Activated CD4-positive, alpha-beta memory T cell treated with anti-CD3 and anti-CD28 coated beads for 36 hours (primary cell): ENCODE measurements at regions of chr16 and their contacts with region 1.

Region 1: GRCh38 chr16:3880623-3881498 is at the start of gene CREBBP:
- DNase-seq: peak; percentile 90
- H3K4me3 Mint-ChIP-seq: peak within 1 kb of the TSS; percentile 91
- H3K27ac Mint-ChIP-seq: peak within 1 kb of the TSS; percentile 90
- H3K4me1 Mint-ChIP-seq: peaks cover 40% of the 10 kb centered on the region
- H3K27me3 Mint-ChIP-seq: no peaks in the 10 kb centered on the region
- total RNA-seq, gene CREBBP: 26.6 to 29.5 TPM

Region 2: GRCh38 chr16:3654249-3654991 is 226.4 kb before region 1 on chr16 and contains the start of gene DNASE1:
- CTCF ChIA-PET with region 1: no interaction called
- POLR2A ChIA-PET with region 1: no interaction called
- intact Hi-C with region 1: loop called (anchors 2 kb)
- DNase-seq: peak; percentile 71
- H3K4me3 Mint-ChIP-seq: no peak within 1 kb of the TSS
- H3K27ac Mint-ChIP-seq: peak within 1 kb of the TSS; percentile 11
- H3K4me1 Mint-ChIP-seq: peaks cover 13% of the 10 kb centered on the region
- H3K27me3 Mint-ChIP-seq: no peaks in the 10 kb centered on the region
- total RNA-seq, gene DNASE1: 11.4 to 14.3 TPM

Region 3: GRCh38 chr16:3690470-3690928 is 190.4 kb before region 1 on chr16:
- CTCF ChIA-PET with region 1: interaction called, 3 read pairs
- POLR2A ChIA-PET with region 1: no interaction called
- intact Hi-C with region 1: loop called (anchors 1 kb)
- DNase-seq: peak; percentile 90
- H3K4me3 Mint-ChIP-seq: no peak overlapping the region
- H3K27ac Mint-ChIP-seq: no peak overlapping the region
- H3K4me1 Mint-ChIP-seq: peaks cover 7% of the 10 kb centered on the region
- H3K27me3 Mint-ChIP-seq: no peaks in the 10 kb centered on the region

Region 4: DNA sequence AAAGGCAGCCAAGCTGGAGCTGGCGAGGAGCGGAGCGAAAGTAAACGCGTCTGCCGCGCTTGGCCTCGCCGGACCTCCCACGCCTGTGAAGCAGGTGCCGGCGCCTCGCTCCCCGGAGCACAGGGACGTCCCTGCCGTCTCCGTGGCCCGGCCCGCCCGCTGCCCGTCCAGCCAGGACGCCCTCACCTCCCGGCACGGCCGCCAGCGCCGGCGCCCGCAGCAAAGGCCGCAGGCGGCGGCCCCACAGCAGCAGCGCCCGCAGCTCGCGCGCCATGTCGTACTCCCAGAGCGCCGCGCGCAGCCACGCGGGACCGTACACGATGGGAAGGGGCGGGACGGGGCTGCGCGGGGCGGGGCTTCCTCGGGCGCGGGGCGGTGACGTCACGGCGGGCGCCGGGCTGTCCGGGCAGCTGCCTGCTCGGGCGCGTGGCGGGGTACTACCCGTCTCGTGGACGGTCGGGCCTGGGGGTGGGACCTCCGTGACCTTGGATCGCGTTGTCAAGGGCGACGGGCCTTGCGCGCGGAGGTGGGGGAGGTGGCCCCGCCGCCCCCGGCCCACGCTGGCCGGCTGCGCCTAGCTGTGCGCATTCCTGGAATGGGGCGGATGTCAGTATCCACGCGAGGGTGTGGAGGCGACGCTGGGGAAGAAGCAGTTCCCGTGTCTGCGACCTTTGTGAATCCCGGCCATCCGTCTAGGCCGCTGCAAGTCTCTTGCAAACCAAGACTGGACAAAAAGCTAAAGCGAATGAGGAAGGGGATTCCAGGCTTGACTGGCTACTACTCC is 163.4 kb before region 1 on chr16 and contains the start of gene TRAP1:
- CTCF ChIA-PET with region 1: interaction called, 3 read pairs
- POLR2A ChIA-PET with region 1: interaction called, 4 read pairs
- intact Hi-C with region 1: loop called (anchors 5 kb)
- DNase-seq: peak; percentile 94
- H3K4me3 Mint-ChIP-seq: peak within 1 kb of the TSS; percentile 93
- H3K27ac Mint-ChIP-seq: peak within 1 kb of the TSS; percentile 83
- H3K4me1 Mint-ChIP-seq: peaks cover 33% of the 10 kb centered on the region
- H3K27me3 Mint-ChIP-seq: no peaks in the 10 kb centered on the region
- total RNA-seq, gene TRAP1: 277 to 282 TPM

Region 5: DNA sequence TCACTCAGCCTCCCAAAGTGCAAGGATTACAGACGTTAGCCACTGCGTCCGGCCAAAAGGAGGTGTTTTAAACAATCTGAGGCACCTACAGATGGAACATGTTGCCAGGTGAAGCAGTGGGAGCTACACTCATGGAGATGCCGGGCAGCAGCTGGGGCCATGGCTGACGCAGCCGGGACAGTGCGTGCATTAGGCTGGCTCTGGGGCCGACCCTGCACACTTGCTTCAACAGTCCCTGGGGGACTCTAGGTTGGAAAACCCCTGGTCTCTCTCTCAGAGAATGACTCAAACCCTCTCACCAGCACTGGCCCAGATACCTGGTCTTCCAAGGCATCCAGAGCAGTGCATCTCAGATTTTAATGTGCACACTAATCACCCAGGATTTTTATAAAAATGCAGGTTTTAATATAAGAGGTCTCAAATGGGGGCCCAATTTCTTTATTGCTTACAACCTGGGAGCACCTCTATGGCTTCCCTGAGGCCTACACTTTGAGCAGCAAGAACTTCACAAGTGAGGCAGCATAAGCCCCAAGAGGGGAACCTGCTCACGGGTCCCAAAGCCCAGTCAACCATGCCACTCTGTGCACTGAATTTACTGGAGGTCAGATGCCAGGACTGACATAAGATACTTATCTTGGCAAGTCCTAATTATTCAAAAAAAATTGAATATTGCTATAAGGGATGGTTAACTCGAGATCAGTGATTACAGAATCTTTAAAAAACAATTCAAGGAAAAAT is 92.8 kb before region 1 on chr16:
- CTCF ChIA-PET with region 1: no interaction called
- POLR2A ChIA-PET with region 1: no interaction called
- intact Hi-C with region 1: loop called (anchors 1 kb)
- DNase-seq: no peak
- H3K4me3 Mint-ChIP-seq: no peak overlapping the region
- H3K27ac Mint-ChIP-seq: no peak overlapping the region
- H3K4me1 Mint-ChIP-seq: peaks cover 27% of the 10 kb centered on the region
- H3K27me3 Mint-ChIP-seq: no peaks in the 10 kb centered on the region

Region 6: DNA sequence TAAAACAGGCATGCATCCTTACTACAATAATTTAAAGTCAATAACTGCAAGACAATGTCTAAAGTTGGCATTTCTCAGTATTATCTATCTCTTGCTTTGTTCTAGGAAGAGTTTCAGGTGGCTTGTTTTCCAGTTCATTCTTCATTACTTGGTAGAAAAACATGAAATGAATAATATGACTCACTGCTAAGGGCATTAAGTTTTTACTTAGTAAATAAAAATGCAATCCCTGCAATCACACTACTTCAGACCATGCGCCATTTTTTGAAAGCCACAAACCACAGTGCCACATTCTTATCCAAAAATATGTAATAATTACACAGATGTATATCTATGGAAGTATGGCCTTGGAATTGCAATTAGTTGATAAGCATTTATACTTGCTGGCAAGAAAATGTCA is 55.8 kb before region 1 on chr16:
- CTCF ChIA-PET with region 1: no interaction called
- POLR2A ChIA-PET with region 1: no interaction called
- intact Hi-C with region 1: loop called (anchors 2 kb)
- DNase-seq: peak; percentile 54
- H3K4me3 Mint-ChIP-seq: no peak overlapping the region
- H3K27ac Mint-ChIP-seq: peak overlapping the region; percentile 24
- H3K4me1 Mint-ChIP-seq: peaks cover 77% of the 10 kb centered on the region
- H3K27me3 Mint-ChIP-seq: no peaks in the 10 kb centered on the region